ENCODE measurements at regions of chr19 and their contacts with region 1.

Region 1: GRCh38 chr19:48954595-48955310 is at the start of gene BAX:
- DNase-seq: peak; percentile 93
- ATAC-seq: peak; percentile 89
- H3K4me3 Mint-ChIP-seq: peak within 1 kb of the TSS; percentile 91
- H3K27ac Mint-ChIP-seq: peak within 1 kb of the TSS; percentile 87
- H3K4me1 Mint-ChIP-seq: peaks cover 26% of the 10 kb centered on the region
- H3K27me3 Mint-ChIP-seq: no peaks in the 10 kb centered on the region
- CTCF ChIP-seq: no peak
- total RNA-seq, gene BAX: 111 and 129 TPM in 2 replicates

Region 2: GRCh38 chr19:48933382-48933932 is 21.3 kb before region 1 on chr19 and contains the start of gene DHDH:
- CTCF ChIA-PET with region 1: no interaction called
- POLR2A ChIA-PET with region 1: no interaction called
- intact Hi-C with region 1: loop called (anchors 1 kb)
- DNase-seq: peak; percentile 73
- ATAC-seq: peak; percentile 99
- H3K4me3 Mint-ChIP-seq: peak within 1 kb of the TSS; percentile 83
- H3K27ac Mint-ChIP-seq: peak within 1 kb of the TSS; percentile 63
- H3K4me1 Mint-ChIP-seq: peaks cover 10% of the 10 kb centered on the region
- H3K27me3 Mint-ChIP-seq: peaks cover 3% of the 10 kb centered on the region
- CTCF ChIP-seq: no peak
- total RNA-seq, gene DHDH: not detected in 2 replicates

Region 3: GRCh38 chr19:49014123-49014869 is 59.5 kb after region 1 on chr19:
- CTCF ChIA-PET with region 1: no interaction called
- POLR2A ChIA-PET with region 1: no interaction called
- intact Hi-C with region 1: no loop called
- DNase-seq: no peak
- ATAC-seq: no peak
- H3K4me3 Mint-ChIP-seq: no peak overlapping the region
- H3K27ac Mint-ChIP-seq: no peak overlapping the region
- H3K4me1 Mint-ChIP-seq: peaks cover 14% of the 10 kb centered on the region
- H3K27me3 Mint-ChIP-seq: peaks cover 2% of the 10 kb centered on the region
- CTCF ChIP-seq: no peak